Motor neuron (in vitro differentiated cells): ENCODE measurements at regions of chr9 and their contacts with region 1.

Region 1: GRCh38 chr9:70602321-70603019 is 188.0 kb upstream of the KLF9 start:
- ATAC-seq: peak; percentile 14 to 88 (median 79)
- H3K4me3 ChIP-seq: no peak overlapping the region
- H3K27ac ChIP-seq: no peak overlapping the region
- H3K4me1 ChIP-seq: peaks cover 9 to 12% of the 10 kb centered on the region in 2 donors

Region 2: GRCh38 chr9:70340572-70340971 is 261.9 kb before region 1 on chr9:
- in situ Hi-C with region 1: loop called in 2 of 9 experiments (anchors 25 kb)
- ATAC-seq: no peak
- H3K4me3 ChIP-seq: no peak overlapping the region
- H3K27ac ChIP-seq: no peak overlapping the region
- H3K4me1 ChIP-seq: no peaks in the 10 kb centered on the region

Region 3: DNA sequence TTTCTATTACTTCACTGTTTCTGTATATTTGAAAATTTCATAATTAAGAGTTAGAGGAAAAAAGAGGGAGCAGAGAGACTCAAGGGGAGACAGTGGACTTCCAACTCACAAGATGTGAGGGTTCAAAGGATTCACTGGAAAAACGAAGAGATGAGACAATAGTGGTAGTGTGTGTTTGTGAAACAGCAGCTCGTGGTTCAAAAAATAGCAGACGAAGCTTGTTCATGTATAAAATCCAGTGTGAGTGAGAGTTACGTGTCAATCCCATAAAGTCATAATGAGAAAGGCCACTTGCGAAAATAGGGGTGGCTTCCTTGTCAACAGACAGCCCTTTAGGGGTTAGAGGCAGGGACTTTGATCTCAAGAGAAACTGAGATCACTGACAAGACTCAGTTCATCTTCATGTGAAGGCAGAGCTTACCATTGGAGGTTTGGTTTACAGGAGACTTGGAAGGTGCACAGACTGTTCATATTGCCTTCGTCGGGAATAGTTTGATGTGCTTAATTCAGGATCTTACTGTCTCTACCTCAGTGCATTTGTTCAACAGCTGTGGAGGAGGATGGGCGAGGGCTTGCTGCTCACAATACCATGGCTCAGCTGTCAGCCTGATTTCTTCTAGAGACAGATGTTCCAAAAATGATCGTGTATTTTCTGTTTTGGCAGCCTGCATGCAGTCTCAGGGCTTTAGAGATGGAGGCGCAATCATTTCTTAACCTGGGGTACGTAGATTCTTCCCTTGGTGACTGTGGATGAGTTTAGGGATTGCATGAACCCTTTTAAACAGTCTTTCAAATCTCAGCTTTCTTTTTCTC is 82.4 kb before region 1 on chr9:
- in situ Hi-C with region 1: no loop called
- ATAC-seq: no peak
- H3K4me3 ChIP-seq: no peak overlapping the region
- H3K27ac ChIP-seq: no peak overlapping the region
- H3K4me1 ChIP-seq: no peaks in the 10 kb centered on the region